ENCODE measurements at regions of chr22 and their contacts with region 1.

Region 1: GRCh38 chr22:30386960-30387827 is at the start of gene RNF215:
- DNase-seq: peak; percentile 90
- ATAC-seq: peak; percentile 88
- H3K4me3 ChIP-seq: peak within 1 kb of the TSS in 4 of 5 experiments; percentile 25 to 61 (median 42)
- H3K4me3 Mint-ChIP-seq: peak within 1 kb of the TSS; percentile 83
- H3K27ac ChIP-seq: no peak within 1 kb of the TSS
- H3K27ac Mint-ChIP-seq: peak within 1 kb of the TSS; percentile 54
- H3K4me1 ChIP-seq: peaks cover 14 to 20% of the 10 kb centered on the region in 2 donors
- H3K4me1 Mint-ChIP-seq: peaks cover 21% of the 10 kb centered on the region
- H3K27me3 ChIP-seq: no peaks in the 10 kb centered on the region
- H3K27me3 Mint-ChIP-seq: no peaks in the 10 kb centered on the region
- CTCF ChIP-seq: peak; percentile 84
- total RNA-seq, gene RNF215: 16.7 and 18.6 TPM in 2 replicates

Region 2: GRCh38 chr22:30305519-30305905 is 81.7 kb before region 1 on chr22:
- CTCF ChIA-PET with region 1: interaction called, 12 read pairs
- POLR2A ChIA-PET with region 1: no interaction called
- intact Hi-C with region 1: no loop called
- DNase-seq: peak; percentile 75
- ATAC-seq: peak; percentile 59
- H3K4me3 ChIP-seq: peak overlapping the region; percentile 17 to 55 (median 43)
- H3K4me3 Mint-ChIP-seq: peak overlapping the region; percentile 80
- H3K27ac ChIP-seq: peak overlapping the region; percentile 73 to 86
- H3K27ac Mint-ChIP-seq: peak overlapping the region; percentile 89
- H3K4me1 ChIP-seq: peaks cover 100% of the 10 kb centered on the region in 2 donors
- H3K4me1 Mint-ChIP-seq: peaks cover 99% of the 10 kb centered on the region
- H3K27me3 ChIP-seq: no peaks in the 10 kb centered on the region
- H3K27me3 Mint-ChIP-seq: no peaks in the 10 kb centered on the region
- CTCF ChIP-seq: no peak

Region 3: DNA sequence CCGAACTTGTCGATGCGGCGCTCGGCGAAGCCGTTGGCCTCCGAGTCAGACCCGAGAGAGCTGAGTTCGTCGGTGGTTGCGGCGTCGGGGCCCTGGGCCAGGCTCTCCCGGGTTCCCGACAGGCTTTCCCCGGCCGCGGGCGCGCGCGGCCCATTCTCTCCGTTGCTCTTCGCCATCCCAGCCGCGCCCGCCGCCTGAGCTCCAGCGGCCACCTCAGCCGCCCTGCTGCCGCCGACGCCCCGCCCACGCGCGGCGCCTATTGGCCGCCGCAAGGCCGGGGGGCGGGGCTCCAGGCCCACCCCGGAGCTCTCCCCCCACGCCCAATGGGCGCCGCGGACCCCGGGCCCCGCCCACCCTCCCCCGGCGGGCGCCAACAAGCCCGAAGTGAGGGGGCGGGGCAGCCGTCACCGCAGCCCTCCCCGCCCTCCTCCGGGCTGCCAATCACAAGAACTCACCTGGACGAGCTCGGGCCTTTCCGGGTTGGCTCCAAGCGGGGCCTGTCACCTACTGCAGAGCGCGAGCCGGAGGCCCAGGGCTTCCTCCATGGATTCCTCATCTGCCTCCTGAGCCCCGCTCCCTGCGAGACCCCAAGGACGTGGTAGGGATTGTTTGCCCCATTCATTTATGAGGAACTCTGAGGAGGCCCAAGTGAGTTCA is 60.4 kb before region 1 on chr22 and contains the start of gene TBC1D10A:
- CTCF ChIA-PET with region 1: interaction called, 20 read pairs
- POLR2A ChIA-PET with region 1: no interaction called
- intact Hi-C with region 1: loop called (anchors 1 kb)
- DNase-seq: peak; percentile 95
- ATAC-seq: peak; percentile 96
- H3K4me3 ChIP-seq: peak within 1 kb of the TSS; percentile 40 to 92 (median 83)
- H3K4me3 Mint-ChIP-seq: peak within 1 kb of the TSS; percentile 86
- H3K27ac ChIP-seq: peak within 1 kb of the TSS; percentile 57 to 88
- H3K27ac Mint-ChIP-seq: peak within 1 kb of the TSS; percentile 93
- H3K4me1 ChIP-seq: peaks cover 30 to 43% of the 10 kb centered on the region in 2 donors
- H3K4me1 Mint-ChIP-seq: peaks cover 49% of the 10 kb centered on the region
- H3K27me3 ChIP-seq: no peaks in the 10 kb centered on the region
- H3K27me3 Mint-ChIP-seq: no peaks in the 10 kb centered on the region
- CTCF ChIP-seq: no peak
- total RNA-seq, gene TBC1D10A: 44.7 and 45.2 TPM in 2 replicates

Region 4: DNA sequence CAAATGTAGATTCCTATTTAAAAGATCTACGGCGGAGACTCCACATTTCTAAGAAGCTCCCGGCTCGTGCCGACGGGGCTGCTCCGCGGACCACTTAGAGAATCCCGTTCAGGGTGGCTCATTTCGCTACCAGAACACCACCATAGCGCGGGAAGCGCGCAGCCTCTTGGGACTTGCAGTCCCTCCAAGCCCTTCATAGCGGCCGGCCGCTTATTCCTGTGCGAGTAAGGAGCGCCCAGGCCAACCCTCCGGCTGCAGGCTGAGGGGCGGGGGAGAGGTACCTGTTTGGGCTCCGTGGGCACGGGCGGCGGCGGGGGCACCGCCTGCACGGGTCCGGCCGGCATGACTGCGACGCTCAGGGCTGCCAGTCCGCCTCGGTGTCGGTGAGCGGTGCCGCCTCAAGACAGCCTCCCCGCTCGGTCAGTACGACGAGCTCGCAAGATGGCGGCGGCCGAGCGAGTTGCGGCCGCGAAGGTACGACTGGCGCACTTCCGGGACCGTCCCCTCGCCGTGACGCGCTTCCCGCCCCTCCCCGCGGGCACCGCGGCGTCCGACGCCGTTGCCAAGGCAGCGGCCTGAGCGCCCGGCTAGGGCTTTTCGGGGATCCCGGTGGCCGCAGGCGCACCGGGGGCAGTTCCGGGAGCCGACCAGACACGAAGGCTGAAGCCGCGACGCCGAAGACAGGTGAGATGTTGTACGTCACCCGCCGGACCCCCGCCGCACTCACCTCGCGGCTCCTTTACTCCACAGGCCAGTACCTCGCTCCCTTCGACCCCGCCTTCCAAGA is 30.6 kb before region 1 on chr22 and contains the starts of genes CCDC157 and SF3A1:
- CTCF ChIA-PET with region 1: interaction called, 7 read pairs
- POLR2A ChIA-PET with region 1: interaction called, 3 read pairs
- intact Hi-C with region 1: loop called (anchors 1 kb)
- DNase-seq: peak; percentile 95
- ATAC-seq: peak; percentile 88
- H3K4me3 ChIP-seq: peak within 1 kb of the TSS; percentile 92 to 98 (median 96)
- H3K4me3 Mint-ChIP-seq: peak within 1 kb of the TSS; percentile 91
- H3K27ac ChIP-seq: peak within 1 kb of the TSS; percentile 90 to 97
- H3K27ac Mint-ChIP-seq: peak within 1 kb of the TSS; percentile 91
- H3K4me1 ChIP-seq: peaks cover 24 to 35% of the 10 kb centered on the region in 2 donors
- H3K4me1 Mint-ChIP-seq: peaks cover 42% of the 10 kb centered on the region
- H3K27me3 ChIP-seq: no peaks in the 10 kb centered on the region
- H3K27me3 Mint-ChIP-seq: no peaks in the 10 kb centered on the region
- CTCF ChIP-seq: no peak
- total RNA-seq, gene CCDC157: 3.6 and 5.4 TPM in 2 replicates
- total RNA-seq, gene SF3A1: 283 and 286 TPM in 2 replicates

Region 5: DNA sequence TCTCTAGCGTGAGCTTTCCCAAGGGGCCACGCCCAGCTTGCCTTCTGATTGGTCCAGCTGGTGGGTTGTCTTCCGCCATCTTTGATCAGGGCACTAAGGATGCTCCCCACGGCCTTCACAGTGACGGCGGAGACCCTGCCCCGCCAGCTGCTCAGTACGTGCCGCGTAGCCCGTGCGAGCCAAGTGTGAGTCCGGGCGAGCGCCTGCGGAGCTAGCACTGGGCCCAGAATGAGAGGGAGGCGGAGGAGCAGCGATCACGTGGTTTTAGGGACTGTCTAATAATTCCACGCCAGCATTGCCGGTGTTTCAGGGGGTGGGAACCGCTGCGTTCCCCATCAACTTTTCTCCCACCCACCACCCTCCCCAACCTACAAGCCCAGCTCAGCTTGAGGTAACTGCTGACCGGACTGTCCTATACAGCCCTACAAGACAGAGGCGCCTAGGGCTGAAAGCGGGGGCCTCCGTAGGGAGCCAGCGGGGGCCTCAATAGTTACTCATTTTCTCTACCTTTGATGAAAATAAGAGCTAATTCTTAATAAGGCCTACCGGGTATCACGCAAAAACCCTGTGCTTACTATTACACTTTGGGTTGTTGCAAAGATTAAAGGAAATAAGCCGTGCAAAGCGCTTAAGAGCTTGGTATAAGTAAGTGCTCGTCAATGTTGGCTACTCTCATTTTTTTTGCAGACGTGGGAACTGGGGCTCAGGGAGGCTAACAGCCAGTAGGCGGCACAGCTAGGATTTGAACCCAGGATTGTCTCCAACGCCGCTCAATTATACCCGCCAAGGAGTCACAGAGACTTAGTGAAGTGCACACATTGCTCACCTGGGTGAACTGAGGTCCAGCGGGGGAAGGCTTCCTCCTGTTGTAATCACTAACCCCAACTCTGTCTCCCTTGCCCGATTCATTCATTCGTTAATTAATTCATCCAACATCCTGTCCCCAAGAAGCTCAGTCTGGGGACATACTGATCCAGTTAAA is 37.1 kb after region 1 on chr22:
- CTCF ChIA-PET with region 1: interaction called, 94 read pairs
- POLR2A ChIA-PET with region 1: interaction called, 5 read pairs
- intact Hi-C with region 1: loop called (anchors 1 kb)
- DNase-seq: peak; percentile 99
- ATAC-seq: peak; percentile 91
- H3K4me3 ChIP-seq: peak overlapping the region; percentile 54 to 84 (median 76)
- H3K4me3 Mint-ChIP-seq: peak overlapping the region; percentile 99
- H3K27ac ChIP-seq: peak overlapping the region; percentile 78 to 89
- H3K27ac Mint-ChIP-seq: peak overlapping the region; percentile 100
- H3K4me1 ChIP-seq: peaks cover 22 to 40% of the 10 kb centered on the region in 2 donors
- H3K4me1 Mint-ChIP-seq: peaks cover 48% of the 10 kb centered on the region
- H3K27me3 ChIP-seq: no peaks in the 10 kb centered on the region
- H3K27me3 Mint-ChIP-seq: no peaks in the 10 kb centered on the region
- CTCF ChIP-seq: no peak

Region 6: DNA sequence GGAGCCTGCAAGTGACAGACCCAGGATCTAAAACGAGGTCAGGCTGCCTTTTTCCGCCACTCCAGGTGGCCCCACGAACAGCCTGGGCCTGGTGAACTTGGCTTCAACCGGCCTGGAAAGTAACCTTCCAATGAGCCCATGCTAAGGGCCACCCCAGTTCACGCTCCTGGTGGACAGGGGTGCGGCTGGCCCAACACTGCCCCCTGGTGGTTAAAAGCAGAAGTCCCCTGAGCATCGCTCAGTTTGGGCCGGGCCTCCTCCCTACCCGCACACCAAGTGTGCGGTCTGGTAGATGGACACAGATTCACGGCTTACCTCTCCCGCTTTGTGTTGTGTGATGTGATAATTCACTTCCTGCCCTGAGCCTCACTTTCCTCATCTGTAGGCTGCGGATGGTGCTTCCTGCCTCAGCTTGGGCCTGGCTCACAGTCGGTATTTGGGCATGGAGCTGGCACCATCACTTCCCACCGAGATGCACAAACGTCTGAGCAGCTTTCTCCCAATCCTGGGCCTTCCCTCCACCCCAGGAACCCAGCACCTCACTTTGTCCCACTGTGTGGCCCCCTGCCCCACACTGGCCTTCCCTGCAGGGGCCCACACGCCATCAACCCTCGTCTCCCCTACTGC is 98.3 kb after region 1 on chr22:
- CTCF ChIA-PET with region 1: interaction called, 70 read pairs
- POLR2A ChIA-PET with region 1: no interaction called
- intact Hi-C with region 1: no loop called
- DNase-seq: peak; percentile 80
- ATAC-seq: peak; percentile 96
- H3K4me3 ChIP-seq: no peak overlapping the region
- H3K4me3 Mint-ChIP-seq: no peak overlapping the region
- H3K27ac ChIP-seq: no peak overlapping the region
- H3K27ac Mint-ChIP-seq: no peak overlapping the region
- H3K4me1 ChIP-seq: no peaks in the 10 kb centered on the region
- H3K4me1 Mint-ChIP-seq: no peaks in the 10 kb centered on the region
- H3K27me3 ChIP-seq: peaks cover 0 to 3% (median 0%) of the 10 kb centered on the region in 4 experiments
- H3K27me3 Mint-ChIP-seq: peaks cover 20% of the 10 kb centered on the region
- CTCF ChIP-seq: peak; percentile 97